ENCODE measurements at regions of chr12 and their contacts with region 1.

Region 1: GRCh38 chr12:108722992-108723766 is 8.1 kb downstream of the CORO1C start:
- DNase-seq: no peak
- ATAC-seq: peak; percentile 17
- H3K4me3 ChIP-seq: no peak overlapping the region
- H3K27ac ChIP-seq: peak overlapping the region; percentile 70
- H3K4me1 ChIP-seq: peaks cover 13 to 75% of the 10 kb centered on the region in 2 experiments
- H3K27me3 ChIP-seq: no peaks in the 10 kb centered on the region
- CTCF ChIP-seq: no peak
- EP300 ChIP-seq: no peak
- POLR2A ChIP-seq: no peak
- RAD21 ChIP-seq: no peak

Region 2: DNA sequence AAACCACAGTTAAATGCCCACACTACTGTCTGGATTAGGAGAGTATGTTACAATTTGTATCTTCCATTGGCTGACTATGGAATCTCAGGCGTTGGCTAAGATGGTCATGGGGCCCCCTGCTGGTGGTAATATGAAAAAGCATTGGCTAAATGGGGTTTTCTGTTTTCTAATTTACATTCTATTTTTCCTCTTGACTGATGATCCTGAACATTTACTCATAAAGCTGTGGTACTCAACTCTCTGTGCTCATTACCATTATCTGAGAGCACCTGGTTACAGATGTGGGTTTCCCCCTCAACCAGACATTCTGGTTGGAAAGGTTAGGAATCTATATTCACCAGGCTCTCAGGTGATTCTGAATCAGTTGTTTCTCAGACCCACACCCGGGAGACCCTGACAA is 529.3 kb before region 1 on chr12:
- CTCF ChIA-PET with region 1: no interaction called
- POLR2A ChIA-PET with region 1: no interaction called
- in situ Hi-C with region 1: no loop called
- intact Hi-C with region 1: no loop called
- DNase-seq: peak; percentile 61 to 69 (median 68)
- ATAC-seq: peak; percentile 64; the same call in 2 of the 3 replicates
- H3K4me3 ChIP-seq: no peak overlapping the region
- H3K27ac ChIP-seq: no peak overlapping the region
- H3K4me1 ChIP-seq: no peaks in the 10 kb centered on the region
- H3K27me3 ChIP-seq: no peaks in the 10 kb centered on the region; a peak in 1 of 5 replicates
- CTCF ChIP-seq: peak; percentile 73 to 92 (median 76)
- EP300 ChIP-seq: no peak
- POLR2A ChIP-seq: no peak
- RAD21 ChIP-seq: peak; percentile 87 to 93

Region 3: DNA sequence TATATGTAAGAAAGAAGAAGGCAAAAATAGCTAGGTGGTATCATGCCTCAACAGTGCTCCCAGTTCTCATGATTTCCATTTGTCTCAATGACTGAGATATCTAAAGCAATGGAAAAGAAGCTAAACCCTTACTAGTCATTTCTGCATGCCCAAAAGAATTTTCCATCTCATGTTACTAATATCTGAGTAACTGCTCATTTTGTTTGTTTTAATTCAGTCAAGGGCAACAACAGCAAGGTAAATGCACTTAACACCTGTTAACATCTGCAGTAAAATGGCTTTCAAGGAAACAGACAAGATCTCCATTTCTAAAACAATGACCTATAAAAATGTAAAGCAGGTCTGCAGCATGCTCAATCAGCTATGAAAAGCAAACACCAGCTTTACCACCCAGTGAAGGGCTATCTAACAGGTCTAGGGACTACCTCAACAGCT is 70.1 kb before region 1 on chr12:
- CTCF ChIA-PET with region 1: no interaction called
- POLR2A ChIA-PET with region 1: no interaction called
- in situ Hi-C with region 1: no loop called
- intact Hi-C with region 1: no loop called
- DNase-seq: no peak
- ATAC-seq: no peak
- H3K4me3 ChIP-seq: no peak overlapping the region
- H3K27ac ChIP-seq: no peak overlapping the region
- H3K4me1 ChIP-seq: peaks cover 0 to 2% of the 10 kb centered on the region in 2 experiments; a peak in 1 of 5 replicates
- H3K27me3 ChIP-seq: no peaks in the 10 kb centered on the region
- CTCF ChIP-seq: no peak
- EP300 ChIP-seq: no peak
- POLR2A ChIP-seq: no peak
- RAD21 ChIP-seq: no peak

Region 4: DNA sequence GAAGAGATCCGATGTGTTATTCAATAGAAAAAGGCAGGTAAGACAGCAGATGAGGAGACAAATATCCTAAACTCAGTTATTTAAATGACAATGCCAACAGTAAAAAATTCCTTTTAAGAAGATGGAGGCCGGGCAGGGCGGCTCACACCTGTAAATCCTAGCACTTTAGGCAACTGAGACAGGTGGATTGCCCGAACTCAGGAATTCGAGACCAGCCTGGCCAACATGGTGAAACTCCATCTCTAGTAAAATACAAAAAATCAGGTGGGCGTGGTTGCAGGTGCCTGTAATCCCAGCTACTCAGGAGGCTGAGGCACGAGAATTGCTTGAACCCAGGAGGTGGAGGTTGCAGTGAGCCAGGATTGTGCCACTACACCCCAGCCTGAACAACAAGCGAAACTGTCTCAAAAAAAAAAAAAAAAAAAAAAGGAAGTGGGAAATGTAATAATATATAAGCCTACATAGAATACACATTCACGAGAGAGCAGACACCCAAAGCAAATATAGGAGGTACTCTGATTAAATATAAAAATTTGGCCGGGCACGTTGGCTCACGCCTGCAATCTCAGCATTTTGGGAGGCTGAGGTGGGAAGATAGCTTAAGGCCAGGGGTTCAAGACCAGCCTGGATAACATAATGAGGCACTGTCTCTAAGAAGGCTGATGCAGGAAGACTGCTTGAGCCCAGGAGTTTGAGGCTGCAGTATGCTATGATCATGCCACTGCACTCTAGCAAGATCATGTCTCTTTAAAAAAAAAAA is 10.8 kb before region 1 on chr12:
- CTCF ChIA-PET with region 1: no interaction called
- POLR2A ChIA-PET with region 1: interaction called, 27 read pairs
- in situ Hi-C with region 1: no loop called
- intact Hi-C with region 1: no loop called
- DNase-seq: no peak
- ATAC-seq: no peak
- H3K4me3 ChIP-seq: no peak overlapping the region
- H3K27ac ChIP-seq: no peak overlapping the region
- H3K4me1 ChIP-seq: peaks cover 18 to 26% of the 10 kb centered on the region in 2 experiments; a peak in 4 of 5 replicates
- H3K27me3 ChIP-seq: no peaks in the 10 kb centered on the region
- CTCF ChIP-seq: no peak
- EP300 ChIP-seq: no peak
- POLR2A ChIP-seq: no peak
- RAD21 ChIP-seq: no peak

Measured in K562 (cell line).